Psoas muscle (tissue), 8 donors: ENCODE measurements at regions of chr4 and their contacts with region 1.

Region 1: DNA sequence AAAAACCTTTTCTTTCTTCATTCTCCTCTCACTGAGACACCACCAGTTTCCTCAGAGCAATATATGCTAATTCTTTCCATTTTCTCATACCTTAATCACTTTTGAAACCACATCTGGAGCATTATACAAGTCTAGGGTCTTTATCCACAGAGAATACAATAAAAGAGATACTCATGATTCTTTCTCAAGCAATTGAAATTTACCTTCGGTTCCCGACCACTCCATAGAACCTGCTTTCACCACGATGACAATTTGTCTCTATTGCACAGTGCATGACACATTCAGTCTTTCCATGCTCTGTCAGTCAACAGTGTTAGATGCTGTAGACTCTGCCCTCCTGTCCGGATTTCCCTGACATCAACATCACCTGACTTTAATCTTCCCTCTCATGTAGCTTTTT is 409.3 kb upstream of the NWD2 start:
- DNase-seq: no peak
- ATAC-seq: no peak
- H3K4me3 ChIP-seq: no peak overlapping the region
- H3K27ac ChIP-seq: no peak overlapping the region
- H3K4me1 ChIP-seq: no peaks in the 10 kb centered on the region
- H3K27me3 ChIP-seq: no peaks in the 10 kb centered on the region
- CTCF ChIP-seq: no peak

Region 2: GRCh38 chr4:35684755-35685154 is 1150.5 kb before region 1 on chr4:
- intact Hi-C with region 1: loop called in 1 of 2 experiments (anchors 5 kb)
- DNase-seq: no peak
- ATAC-seq: no peak
- H3K4me3 ChIP-seq: no peak overlapping the region
- H3K27ac ChIP-seq: no peak overlapping the region
- H3K4me1 ChIP-seq: no peaks in the 10 kb centered on the region
- H3K27me3 ChIP-seq: no peaks in the 10 kb centered on the region
- CTCF ChIP-seq: no peak